Activated CD8-positive, alpha-beta memory T cell treated with anti-CD3 and anti-CD28 coated beads, Interleukin-2, amount 10 ng/mL, durations not matched to agents 7 days and 5 days (primary cell): ENCODE measurements at regions of chr1 and their contacts with region 1.

Region 1: GRCh38 chr1:165367375-165367993 is 11.0 kb upstream of the LMX1A start:
- DNase-seq: peak; percentile 85
- ATAC-seq: peak; percentile 47
- H3K4me3 Mint-ChIP-seq: no peak overlapping the region
- H3K27ac Mint-ChIP-seq: no peak overlapping the region
- H3K4me1 Mint-ChIP-seq: no peaks in the 10 kb centered on the region
- H3K27me3 Mint-ChIP-seq: peaks cover 80% of the 10 kb centered on the region

Region 2: GRCh38 chr1:165288350-165289148 is 78.9 kb before region 1 on chr1:
- CTCF ChIA-PET with region 1: no interaction called
- DNase-seq: no peak
- ATAC-seq: no peak
- H3K4me3 Mint-ChIP-seq: no peak overlapping the region
- H3K27ac Mint-ChIP-seq: no peak overlapping the region
- H3K4me1 Mint-ChIP-seq: no peaks in the 10 kb centered on the region
- H3K27me3 Mint-ChIP-seq: peaks cover 13% of the 10 kb centered on the region

Region 3: DNA sequence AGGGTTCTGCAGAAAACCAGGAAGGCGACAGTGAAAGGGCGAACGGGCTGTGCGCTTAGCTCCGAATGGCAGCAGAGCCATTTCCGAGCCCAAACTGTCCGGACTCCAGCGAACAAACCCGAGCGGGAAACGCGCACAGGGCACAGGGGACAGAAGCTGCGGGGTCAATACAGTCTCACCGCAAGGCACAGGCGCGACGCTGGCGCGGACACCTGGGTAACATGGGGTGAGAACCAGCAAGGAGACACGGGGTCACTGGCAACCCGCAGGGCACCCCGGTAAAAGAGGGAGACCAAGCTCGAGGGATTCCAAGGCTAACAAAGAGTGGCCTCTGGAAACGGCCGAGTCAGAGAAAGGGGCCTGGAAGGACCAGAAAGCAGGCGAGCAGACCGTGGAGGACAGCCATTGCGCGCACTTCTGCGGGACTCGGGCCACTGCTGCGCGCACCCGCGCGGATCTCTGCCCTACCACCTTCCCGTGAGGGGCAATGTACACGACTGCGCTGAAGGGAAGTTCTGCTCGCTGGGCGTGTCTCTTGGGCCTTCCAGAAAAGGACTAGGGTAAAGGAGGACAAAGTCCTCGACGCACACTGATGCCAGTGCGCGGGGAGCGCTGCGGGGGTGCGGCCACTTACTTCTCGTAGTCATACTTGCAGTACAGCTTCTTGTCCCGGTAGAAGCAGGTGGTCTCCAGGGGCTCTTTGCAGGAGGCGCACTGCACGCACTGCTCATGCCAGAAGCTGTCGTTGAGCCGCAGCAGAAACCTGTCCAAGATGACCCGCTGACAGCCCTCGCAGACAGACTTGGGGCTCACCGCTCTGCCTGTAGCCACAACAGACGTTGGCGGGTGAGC is 14.8 kb before region 1 on chr1:
- CTCF ChIA-PET with region 1: interaction called, 20 read pairs
- DNase-seq: no peak
- ATAC-seq: no peak
- H3K4me3 Mint-ChIP-seq: no peak overlapping the region
- H3K27ac Mint-ChIP-seq: peak overlapping the region; percentile 46
- H3K4me1 Mint-ChIP-seq: peaks cover 2% of the 10 kb centered on the region
- H3K27me3 Mint-ChIP-seq: peaks cover 91% of the 10 kb centered on the region

Region 4: GRCh38 chr1:165383067-165383466 is 15.6 kb after region 1 on chr1:
- CTCF ChIA-PET with region 1: interaction called, 28 read pairs
- DNase-seq: no peak
- ATAC-seq: no peak
- H3K4me3 Mint-ChIP-seq: no peak overlapping the region
- H3K27ac Mint-ChIP-seq: no peak overlapping the region
- H3K4me1 Mint-ChIP-seq: no peaks in the 10 kb centered on the region
- H3K27me3 Mint-ChIP-seq: peaks cover 75% of the 10 kb centered on the region

Region 5: DNA sequence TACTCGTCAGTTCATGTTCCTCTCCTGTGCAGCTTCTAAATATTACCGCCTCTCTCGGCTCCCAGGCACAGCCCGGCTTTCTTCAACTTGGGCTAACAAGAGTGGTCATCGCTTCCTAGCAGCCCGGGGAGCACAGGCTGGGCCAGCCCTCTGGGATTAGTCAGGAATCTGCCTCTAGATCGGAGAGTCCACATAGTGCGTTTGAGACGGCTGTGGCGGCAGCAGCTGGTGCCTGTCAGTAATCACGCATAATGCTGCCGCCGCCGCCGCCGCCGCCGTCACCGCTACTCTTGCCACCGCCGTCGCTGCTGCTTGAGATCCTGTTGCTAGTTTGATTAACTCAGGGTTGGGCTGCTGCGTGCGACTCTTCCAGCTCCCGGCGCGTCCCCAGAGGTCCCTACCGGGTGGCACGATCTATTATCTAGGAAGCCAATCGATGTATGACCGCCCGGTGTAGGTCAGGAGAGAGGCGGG is 77.5 kb after region 1 on chr1 and contains the start of gene RXRG:
- CTCF ChIA-PET with region 1: no interaction called
- DNase-seq: no peak
- ATAC-seq: peak; percentile 45
- H3K4me3 Mint-ChIP-seq: no peak within 1 kb of the TSS
- H3K27ac Mint-ChIP-seq: no peak within 1 kb of the TSS
- H3K4me1 Mint-ChIP-seq: no peaks in the 10 kb centered on the region
- H3K27me3 Mint-ChIP-seq: peaks cover 40% of the 10 kb centered on the region
- total RNA-seq, gene RXRG: not detected

Region 6: GRCh38 chr1:165516469-165516868 is 149.0 kb after region 1 on chr1:
- CTCF ChIA-PET with region 1: no interaction called
- DNase-seq: no peak
- ATAC-seq: no peak
- H3K4me3 Mint-ChIP-seq: no peak overlapping the region
- H3K27ac Mint-ChIP-seq: no peak overlapping the region
- H3K4me1 Mint-ChIP-seq: no peaks in the 10 kb centered on the region
- H3K27me3 Mint-ChIP-seq: peaks cover 17% of the 10 kb centered on the region

Region 7: GRCh38 chr1:165597883-165598675 is 230.6 kb after region 1 on chr1:
- CTCF ChIA-PET with region 1: interaction called, 40 read pairs
- DNase-seq: peak; percentile 98
- ATAC-seq: peak; percentile 99
- H3K4me3 Mint-ChIP-seq: peak overlapping the region; percentile 84
- H3K27ac Mint-ChIP-seq: peak overlapping the region; percentile 86
- H3K4me1 Mint-ChIP-seq: peaks cover 34% of the 10 kb centered on the region
- H3K27me3 Mint-ChIP-seq: peaks cover 37% of the 10 kb centered on the region